ENCODE measurements at regions of chr2 and their contacts with region 1.

Region 1: DNA sequence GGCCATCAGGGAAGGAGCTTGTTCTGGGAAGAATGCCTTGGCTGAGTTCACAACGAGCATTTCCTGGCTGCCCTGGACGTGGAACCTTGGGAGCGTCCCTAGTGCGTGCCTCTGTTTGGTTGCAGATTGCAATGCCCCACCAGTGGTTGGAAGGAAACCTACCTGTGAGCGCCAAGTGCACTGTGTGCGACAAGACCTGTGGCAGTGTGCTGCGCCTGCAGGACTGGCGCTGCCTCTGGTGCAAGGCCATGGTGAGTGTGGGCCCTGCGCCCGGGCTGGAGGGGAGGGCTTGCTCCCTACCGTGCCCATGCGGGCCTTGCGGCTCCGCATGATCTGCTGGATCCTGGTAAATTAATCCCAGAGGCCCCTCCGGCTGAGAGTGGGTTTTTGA is 81.9 kb downstream of the DGKD start:
- DNase-seq: no peak
- ATAC-seq: peak in 4 of 8 donors; percentile 10 to 76 (median 64)
- H3K4me3 ChIP-seq: no peak overlapping the region
- H3K27ac ChIP-seq: peak overlapping the region in 4 of 10 donors; percentile 13 to 55 (median 26)
- H3K4me1 ChIP-seq: peaks cover 6 to 71% (median 34%) of the 10 kb centered on the region in 9 donors
- H3K27me3 ChIP-seq: no peaks in the 10 kb centered on the region
- CTCF ChIP-seq: no peak

Region 2: DNA sequence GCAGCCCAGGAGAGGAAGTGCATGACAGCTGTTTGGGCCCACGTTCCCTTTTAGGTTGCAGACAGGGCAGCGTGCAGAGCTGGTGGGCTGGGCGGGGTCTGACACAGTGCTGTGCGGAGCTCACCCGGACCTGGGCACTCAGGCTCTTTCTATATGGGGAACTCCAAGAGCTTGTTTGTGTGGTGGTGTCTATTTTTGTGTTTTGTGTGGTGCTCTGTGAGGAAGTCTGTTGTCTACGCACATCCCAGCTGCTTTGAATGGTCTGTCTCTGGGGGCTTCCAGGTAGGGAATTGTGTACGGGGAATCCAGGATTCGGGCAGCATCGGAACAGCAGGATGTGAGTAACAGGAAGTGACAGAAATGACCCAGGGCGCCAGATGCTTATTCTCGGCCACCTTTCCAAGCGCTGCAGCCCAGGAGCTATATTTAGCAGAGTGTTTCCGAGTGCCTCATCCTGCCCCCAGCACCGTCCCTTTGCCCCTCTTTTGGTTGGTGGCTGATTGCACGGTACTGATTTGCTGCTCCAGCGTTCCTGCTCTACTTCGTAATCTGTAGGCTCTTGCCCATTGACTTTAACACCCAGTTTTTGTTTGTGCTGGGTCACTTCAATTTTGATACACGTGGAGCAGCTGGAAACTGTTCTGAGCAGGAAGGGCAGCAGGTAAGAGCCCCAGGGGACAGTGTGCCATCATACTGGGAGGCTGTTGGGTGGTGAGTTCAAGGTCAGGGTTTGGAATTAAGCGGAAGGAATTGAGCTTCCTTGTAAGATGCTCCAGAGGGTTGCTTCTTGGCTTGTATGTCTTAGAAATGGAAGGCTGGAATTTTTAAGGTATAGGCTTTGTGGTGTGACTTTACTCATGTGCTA is 17.2 kb before region 1 on chr2:
- intact Hi-C with region 1: loop called in 1 of 10 experiments (anchors 2 kb)
- DNase-seq: peak; percentile 61 to 86
- ATAC-seq: peak; percentile 82 to 91 (median 88)
- H3K4me3 ChIP-seq: peak overlapping the region in 9 of 10 donors; percentile 18 to 59 (median 57)
- H3K27ac ChIP-seq: peak overlapping the region; percentile 72 to 94 (median 90)
- H3K4me1 ChIP-seq: peaks cover 11 to 86% (median 74%) of the 10 kb centered on the region in 9 donors
- H3K27me3 ChIP-seq: no peaks in the 10 kb centered on the region
- CTCF ChIP-seq: no peak

Measured in heart right ventricle (tissue), 16 donors.